ENCODE measurements at regions of chr14 and their contacts with region 1.

Region 1: GRCh38 chr14:24058260-24058950 is 6.6 kb downstream of the CARMIL3 start:
- DNase-seq: peak; percentile 41
- H3K4me3 Mint-ChIP-seq: no peak overlapping the region
- H3K27ac Mint-ChIP-seq: no peak overlapping the region
- H3K4me1 Mint-ChIP-seq: peaks cover 3% of the 10 kb centered on the region
- H3K27me3 Mint-ChIP-seq: peaks cover 68% of the 10 kb centered on the region
- CTCF ChIP-seq: peak; percentile 22

Region 2: GRCh38 chr14:24108336-24108874 is 50.0 kb after region 1 on chr14:
- CTCF ChIA-PET with region 1: interaction called, 64 read pairs
- intact Hi-C with region 1: loop called (anchors 1 kb)
- DNase-seq: no peak
- H3K4me3 Mint-ChIP-seq: no peak overlapping the region
- H3K27ac Mint-ChIP-seq: no peak overlapping the region
- H3K4me1 Mint-ChIP-seq: peaks cover 5% of the 10 kb centered on the region
- H3K27me3 Mint-ChIP-seq: no peaks in the 10 kb centered on the region
- CTCF ChIP-seq: no peak